Heart left ventricle (tissue), 16 donors: ENCODE measurements at regions of chr17 and their contacts with region 1.

Region 1: DNA sequence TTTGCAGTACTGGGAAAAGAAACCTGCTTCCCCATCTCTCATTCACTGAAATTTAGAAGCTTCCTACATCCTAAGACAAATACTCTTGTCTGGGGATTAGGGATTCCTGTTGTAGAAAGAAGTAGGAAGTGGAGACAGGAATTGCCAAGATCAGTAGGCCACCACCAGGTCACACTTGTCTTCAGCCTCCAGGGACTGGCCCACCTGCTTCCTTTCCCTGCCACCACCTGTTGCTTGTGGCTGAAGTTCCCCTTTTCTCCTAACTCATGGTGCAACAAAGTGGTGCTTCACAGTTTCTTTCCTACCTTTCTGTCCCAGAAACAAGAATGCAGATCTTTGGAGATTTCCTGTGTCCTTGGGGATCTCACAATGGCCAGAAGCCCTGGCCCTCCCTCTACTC is 82.4 kb downstream of the WNT3 start:
- DNase-seq: no peak
- ATAC-seq: no peak
- H3K4me3 ChIP-seq: no peak overlapping the region
- H3K27ac ChIP-seq: no peak overlapping the region
- H3K4me1 ChIP-seq: no peaks in the 10 kb centered on the region
- H3K27me3 ChIP-seq: no peaks in the 10 kb centered on the region
- CTCF ChIP-seq: no peak
- POLR2A ChIP-seq: no peak

Region 2: DNA sequence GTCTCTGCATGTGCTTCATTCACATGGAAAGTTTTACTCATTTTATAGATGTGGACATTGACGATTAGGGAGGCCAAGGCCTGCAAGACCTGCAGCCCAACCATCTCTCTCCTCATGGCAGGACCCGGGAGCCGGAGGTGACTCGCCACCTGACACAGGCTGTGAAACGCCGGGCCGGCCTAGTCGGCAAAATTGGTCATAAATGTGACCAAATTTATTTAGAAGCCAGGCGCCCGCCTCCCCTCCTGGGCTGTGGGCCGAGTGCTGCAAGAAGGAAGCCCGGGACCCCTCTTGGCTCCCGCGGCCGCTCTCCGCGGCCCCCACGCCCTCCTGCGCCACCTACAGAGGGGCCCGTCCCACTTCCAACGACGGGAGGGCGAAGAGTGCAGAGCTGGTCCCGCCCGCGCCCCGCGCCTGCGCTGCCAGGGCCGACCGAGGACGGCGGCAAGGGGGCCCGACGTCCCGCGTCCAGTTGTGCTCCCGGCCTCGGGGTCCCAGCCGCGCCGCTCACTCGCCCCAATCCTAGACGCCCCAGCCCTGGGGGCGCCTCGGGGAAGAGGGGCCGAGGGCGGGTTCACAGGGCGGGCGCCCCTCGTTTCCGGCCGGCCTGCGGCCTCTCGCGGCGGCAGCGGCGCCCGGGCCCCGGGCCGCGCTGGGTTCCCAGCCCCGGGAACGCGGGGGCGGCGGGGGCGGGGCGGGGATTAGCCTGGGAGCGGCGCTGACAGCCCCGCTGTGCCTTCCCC is 34.9 kb after region 1 on chr17:
- intact Hi-C with region 1: loop called in 1 of 10 experiments (anchors 5 kb)
- DNase-seq: peak in 4 of 5 donors; percentile 43 to 59 (median 50)
- ATAC-seq: peak; percentile 22 to 77 (median 58)
- H3K4me3 ChIP-seq: peak overlapping the region; percentile 15 to 80 (median 60)
- H3K27ac ChIP-seq: peak overlapping the region in 10 of 12 donors; percentile 14 to 75 (median 52)
- H3K4me1 ChIP-seq: peaks cover 0 to 19% (median 7%) of the 10 kb centered on the region in 12 donors
- H3K27me3 ChIP-seq: peaks cover 0 to 41% (median 0%) of the 10 kb centered on the region in 9 donors
- CTCF ChIP-seq: peak in 1 of 12 donors; percentile 24
- POLR2A ChIP-seq: peak in 1 of 2 donors; percentile 17

Region 3: DNA sequence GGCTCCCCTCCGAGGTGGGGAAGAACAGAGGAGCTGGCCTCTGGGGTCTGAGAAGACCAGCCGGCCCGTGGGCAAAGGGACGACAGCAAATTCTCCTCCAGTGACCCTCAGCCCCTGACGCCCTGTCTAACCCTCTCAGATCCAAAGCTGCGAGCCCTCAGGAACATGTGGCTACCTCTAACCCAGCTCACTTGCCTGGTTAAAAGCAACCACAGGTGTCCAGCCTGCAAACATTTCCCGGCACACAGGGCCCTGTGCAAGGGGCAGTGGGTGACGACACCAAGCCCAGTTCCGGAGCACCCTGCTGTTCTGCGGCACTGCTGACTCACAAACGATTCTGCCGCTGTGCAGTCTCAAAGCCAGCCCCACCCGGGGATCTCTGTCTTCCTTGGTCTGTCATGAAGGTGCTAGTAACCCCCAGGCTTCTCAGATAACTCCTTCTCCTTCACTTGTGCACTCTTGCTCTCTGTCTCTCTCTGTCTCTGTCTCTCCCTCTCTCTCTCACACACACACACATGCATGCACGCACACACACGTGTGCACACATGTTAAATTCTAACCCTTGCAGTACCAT is 59.4 kb after region 1 on chr17:
- intact Hi-C with region 1: no loop called
- DNase-seq: no peak
- ATAC-seq: no peak
- H3K4me3 ChIP-seq: no peak overlapping the region
- H3K27ac ChIP-seq: no peak overlapping the region
- H3K4me1 ChIP-seq: no peaks in the 10 kb centered on the region
- H3K27me3 ChIP-seq: peaks cover 0 to 58% (median 4%) of the 10 kb centered on the region in 9 donors
- CTCF ChIP-seq: no peak
- POLR2A ChIP-seq: no peak